AG04449 (cell line): ENCODE measurements at regions of chr2 and their contacts with region 1.

Region 1: DNA sequence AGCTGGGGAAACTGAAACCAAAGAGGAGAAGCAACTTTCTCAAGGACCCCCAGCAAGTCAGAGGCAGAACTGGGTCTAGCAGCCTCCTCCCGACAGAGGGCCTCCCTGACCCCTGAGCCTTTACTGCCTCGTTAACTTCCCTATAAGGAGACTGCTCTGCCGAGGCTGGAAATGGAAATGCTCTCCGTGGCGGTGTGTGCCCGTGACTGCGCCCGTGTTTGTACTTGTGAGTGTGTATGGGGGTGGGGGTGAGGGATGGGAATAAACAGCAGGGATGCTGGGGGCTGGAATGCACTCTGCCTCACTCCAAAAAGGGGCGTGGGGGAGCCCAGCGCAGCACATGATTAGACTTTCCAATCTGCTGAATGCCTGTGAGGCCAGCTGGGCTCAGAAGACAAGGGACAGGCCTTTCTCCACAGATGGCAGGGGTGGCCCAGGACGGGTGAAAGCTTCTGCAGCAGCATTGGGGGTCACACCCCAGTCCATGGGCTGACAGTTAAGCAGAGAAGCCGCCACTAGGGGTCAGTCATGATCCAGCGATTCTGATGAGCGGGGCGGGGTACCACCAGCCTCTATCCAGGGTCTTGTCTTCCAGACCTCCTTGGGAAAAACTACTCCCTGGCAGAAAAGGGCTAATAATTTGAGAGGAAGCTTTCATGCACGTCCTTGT is 26.8 kb downstream of the MPHOSPH10 start:
- DNase-seq: no peak
- H3K4me3 ChIP-seq: peak overlapping the region; percentile 38
- CTCF ChIP-seq: peak; percentile 60

Region 2: GRCh38 chr2:71143782-71144181 is 13.5 kb before region 1 on chr2:
- CTCF ChIA-PET with region 1: interaction called, 18 read pairs
- POLR2A ChIA-PET with region 1: no interaction called
- DNase-seq: no peak
- H3K4me3 ChIP-seq: no peak overlapping the region
- CTCF ChIP-seq: no peak

Region 3: GRCh38 chr2:71306762-71307161 is 149.5 kb after region 1 on chr2:
- CTCF ChIA-PET with region 1: no interaction called
- POLR2A ChIA-PET with region 1: no interaction called
- DNase-seq: no peak
- H3K4me3 ChIP-seq: no peak overlapping the region
- CTCF ChIP-seq: no peak